ENCODE measurements at regions of chr10 and their contacts with region 1.

Region 1: DNA sequence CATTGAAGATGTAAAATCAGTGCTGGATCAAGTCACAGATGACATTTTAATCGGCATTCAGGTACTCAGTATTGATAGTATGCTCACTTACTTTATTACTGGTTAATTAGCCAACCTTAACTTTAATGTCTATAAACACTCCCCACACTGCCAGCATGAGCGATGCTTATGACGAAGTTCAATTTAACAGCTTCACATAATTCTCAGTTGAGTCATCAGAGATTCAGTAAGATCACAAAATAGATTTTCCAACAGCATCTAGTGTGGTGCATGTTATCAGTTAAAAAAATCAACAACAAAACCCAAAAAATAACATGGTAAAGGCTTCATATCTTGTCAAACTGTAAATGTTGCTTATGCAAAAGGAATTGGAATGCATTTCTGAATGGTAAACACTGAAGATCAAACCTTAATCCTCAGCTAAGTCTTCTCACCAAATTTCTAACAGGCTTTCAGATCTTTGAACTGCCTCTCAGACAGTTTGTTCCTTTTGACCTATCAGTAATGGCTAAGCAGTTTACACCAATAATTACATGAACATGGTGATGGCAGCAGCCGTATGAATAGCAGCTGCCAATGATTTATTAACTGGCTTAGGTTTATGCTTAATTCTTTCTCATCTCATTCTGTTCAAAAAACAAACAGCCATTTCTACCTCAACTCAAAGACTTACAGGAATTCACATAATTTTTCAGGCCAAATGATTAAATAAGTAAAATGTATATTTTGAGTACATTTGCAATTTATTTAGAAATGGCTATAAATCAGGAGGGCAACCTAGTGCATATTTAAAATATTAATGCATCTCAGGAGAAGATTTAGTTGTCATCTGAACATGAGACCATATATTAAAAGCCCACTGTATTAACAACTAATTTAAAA is 98.5 kb downstream of the CABCOCO1 start:
- DNase-seq: no peak
- H3K4me3 ChIP-seq: no peak overlapping the region
- H3K27ac ChIP-seq: peak overlapping the region in 1 of 2 experiments; percentile 89
- H3K4me1 ChIP-seq: peaks cover 8 to 83% (median 45%) of the 10 kb centered on the region in 4 experiments
- H3K27me3 ChIP-seq: no peaks in the 10 kb centered on the region

Region 2: GRCh38 chr10:61733358-61733940 is 27.7 kb before region 1 on chr10:
- CTCF ChIA-PET with region 1: interaction called, 12 read pairs
- POLR2A ChIA-PET with region 1: no interaction called
- DNase-seq: peak; percentile 58 to 75 (median 74)
- H3K4me3 ChIP-seq: no peak overlapping the region
- H3K27ac ChIP-seq: no peak overlapping the region
- H3K4me1 ChIP-seq: peaks cover 0 to 10% (median 7%) of the 10 kb centered on the region in 4 experiments
- H3K27me3 ChIP-seq: no peaks in the 10 kb centered on the region

Region 3: GRCh38 chr10:61779950-61780659 is 18.9 kb after region 1 on chr10:
- CTCF ChIA-PET with region 1: interaction called, 23 read pairs
- POLR2A ChIA-PET with region 1: interaction called, 25 read pairs
- DNase-seq: peak; percentile 89 to 98 (median 96)
- H3K4me3 ChIP-seq: peak overlapping the region in 1 of 7 experiments; percentile 29
- H3K27ac ChIP-seq: peak overlapping the region; percentile 91 to 92
- H3K4me1 ChIP-seq: peaks cover 5 to 55% (median 22%) of the 10 kb centered on the region in 4 experiments
- H3K27me3 ChIP-seq: no peaks in the 10 kb centered on the region